ENCODE measurements at regions of chr20 and their contacts with region 1.

Region 1: DNA sequence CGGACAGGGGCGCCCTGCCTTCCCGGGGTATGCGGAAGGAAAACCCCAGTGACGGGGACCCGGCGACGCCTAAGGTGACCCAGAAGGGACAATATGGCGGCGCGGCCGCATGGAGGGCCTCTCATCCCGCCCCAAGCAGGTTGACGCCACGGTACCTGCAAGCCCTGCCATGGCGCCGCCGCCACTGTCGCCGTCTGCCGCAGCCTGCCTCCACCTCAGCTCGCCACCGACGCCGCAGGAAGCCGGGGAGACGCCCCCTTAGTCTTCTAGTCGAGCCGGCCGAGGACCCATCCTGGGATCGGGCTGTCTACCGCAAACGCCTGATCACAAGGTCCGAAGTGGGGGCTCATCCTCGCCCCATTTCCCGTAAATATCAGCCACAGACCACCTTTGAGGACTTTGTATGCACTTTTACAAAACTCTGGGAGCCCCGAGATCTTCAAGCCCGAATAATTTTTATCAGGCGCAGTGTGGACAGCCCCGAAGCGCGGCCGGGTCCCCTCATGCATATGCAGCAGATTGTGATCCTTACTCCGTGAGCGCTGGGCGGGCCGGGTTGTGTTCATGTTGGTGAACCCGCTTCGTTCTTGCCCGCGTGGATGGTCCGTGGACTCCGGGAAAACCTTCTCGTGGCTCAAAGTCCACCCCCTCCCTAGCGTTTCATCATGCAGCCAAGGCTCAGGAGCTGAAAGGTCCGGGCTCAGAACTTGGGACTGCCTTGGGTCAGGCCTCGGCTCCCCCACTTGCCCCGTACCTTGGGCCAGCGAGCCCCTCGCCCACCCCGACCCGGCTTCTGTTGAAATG is at the start of gene BLCAP:
- DNase-seq: peak; percentile 93
- H3K4me3 Mint-ChIP-seq: peak within 1 kb of the TSS; percentile 86
- H3K27ac Mint-ChIP-seq: peak within 1 kb of the TSS; percentile 99
- H3K4me1 Mint-ChIP-seq: peaks cover 42% of the 10 kb centered on the region
- H3K27me3 Mint-ChIP-seq: peaks cover 1% of the 10 kb centered on the region
- total RNA-seq, gene BLCAP: 16.0 to 16.4 TPM

Region 2: DNA sequence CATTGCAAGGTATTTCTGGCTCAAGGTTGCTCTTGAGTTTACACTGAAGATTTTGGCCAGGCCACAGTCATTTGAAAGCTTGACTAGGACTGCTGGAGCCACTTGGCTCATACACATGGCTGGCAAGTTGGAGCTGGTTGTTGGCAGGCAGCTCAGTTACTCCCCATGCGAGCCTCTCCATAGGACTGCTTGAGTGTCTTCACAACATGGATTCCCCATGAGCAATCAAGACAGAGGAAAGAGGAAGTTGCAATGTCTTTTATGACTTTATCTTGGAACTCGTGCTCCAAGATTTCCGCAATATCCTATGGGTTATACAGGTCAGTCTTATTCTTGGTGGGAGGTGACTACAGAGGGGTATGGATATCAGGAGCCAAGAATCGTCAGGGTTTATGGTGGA is 239.7 kb before region 1 on chr20:
- CTCF ChIA-PET with region 1: no interaction called
- POLR2A ChIA-PET with region 1: no interaction called
- intact Hi-C with region 1: loop called (anchors 5 kb)
- DNase-seq: no peak
- H3K4me3 Mint-ChIP-seq: peak overlapping the region; percentile 18
- H3K27ac Mint-ChIP-seq: no peak overlapping the region
- H3K4me1 Mint-ChIP-seq: peaks cover 23% of the 10 kb centered on the region
- H3K27me3 Mint-ChIP-seq: peaks cover 2% of the 10 kb centered on the region

Region 3: DNA sequence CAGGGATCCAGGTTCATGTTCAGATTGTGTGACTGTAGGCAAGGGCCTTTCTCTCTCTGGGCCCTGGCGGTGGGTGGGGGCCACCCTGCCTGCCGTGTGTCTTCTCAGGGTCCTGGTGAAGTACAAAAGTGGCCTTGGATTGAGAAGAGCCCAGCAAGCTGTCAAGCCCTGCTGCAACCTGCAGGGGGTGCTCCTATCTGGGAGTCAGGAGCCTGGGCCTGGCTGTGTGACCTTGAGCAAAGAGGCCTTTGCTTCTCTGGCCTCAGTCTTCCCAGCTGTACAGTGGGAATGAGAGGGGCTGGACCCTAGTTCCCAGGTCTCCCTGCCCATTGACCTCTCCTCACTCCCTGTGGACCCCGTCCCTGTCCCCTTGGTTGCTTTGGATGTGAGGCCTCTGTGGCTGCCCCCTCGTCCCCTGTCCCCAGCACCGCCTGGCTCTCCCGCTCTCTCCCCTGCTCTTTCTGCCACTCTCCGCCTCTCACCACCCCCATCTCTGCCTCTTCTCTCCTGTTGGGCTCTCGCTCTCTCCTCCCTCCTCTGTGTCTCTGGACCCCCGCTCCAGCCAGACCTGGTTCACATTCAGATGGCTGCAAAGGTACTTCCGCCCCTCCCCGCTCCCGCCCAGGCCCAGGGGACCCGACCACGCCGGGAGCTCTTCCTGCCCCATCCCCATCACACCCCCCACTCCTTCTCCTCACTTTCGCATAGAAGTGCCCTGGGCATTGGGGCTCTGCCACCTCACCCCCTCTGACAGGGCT is 135.2 kb before region 1 on chr20:
- CTCF ChIA-PET with region 1: no interaction called
- POLR2A ChIA-PET with region 1: no interaction called
- intact Hi-C with region 1: loop called (anchors 5 kb)
- DNase-seq: peak; percentile 43
- H3K4me3 Mint-ChIP-seq: no peak overlapping the region
- H3K27ac Mint-ChIP-seq: no peak overlapping the region
- H3K4me1 Mint-ChIP-seq: no peaks in the 10 kb centered on the region
- H3K27me3 Mint-ChIP-seq: no peaks in the 10 kb centered on the region

Region 4: DNA sequence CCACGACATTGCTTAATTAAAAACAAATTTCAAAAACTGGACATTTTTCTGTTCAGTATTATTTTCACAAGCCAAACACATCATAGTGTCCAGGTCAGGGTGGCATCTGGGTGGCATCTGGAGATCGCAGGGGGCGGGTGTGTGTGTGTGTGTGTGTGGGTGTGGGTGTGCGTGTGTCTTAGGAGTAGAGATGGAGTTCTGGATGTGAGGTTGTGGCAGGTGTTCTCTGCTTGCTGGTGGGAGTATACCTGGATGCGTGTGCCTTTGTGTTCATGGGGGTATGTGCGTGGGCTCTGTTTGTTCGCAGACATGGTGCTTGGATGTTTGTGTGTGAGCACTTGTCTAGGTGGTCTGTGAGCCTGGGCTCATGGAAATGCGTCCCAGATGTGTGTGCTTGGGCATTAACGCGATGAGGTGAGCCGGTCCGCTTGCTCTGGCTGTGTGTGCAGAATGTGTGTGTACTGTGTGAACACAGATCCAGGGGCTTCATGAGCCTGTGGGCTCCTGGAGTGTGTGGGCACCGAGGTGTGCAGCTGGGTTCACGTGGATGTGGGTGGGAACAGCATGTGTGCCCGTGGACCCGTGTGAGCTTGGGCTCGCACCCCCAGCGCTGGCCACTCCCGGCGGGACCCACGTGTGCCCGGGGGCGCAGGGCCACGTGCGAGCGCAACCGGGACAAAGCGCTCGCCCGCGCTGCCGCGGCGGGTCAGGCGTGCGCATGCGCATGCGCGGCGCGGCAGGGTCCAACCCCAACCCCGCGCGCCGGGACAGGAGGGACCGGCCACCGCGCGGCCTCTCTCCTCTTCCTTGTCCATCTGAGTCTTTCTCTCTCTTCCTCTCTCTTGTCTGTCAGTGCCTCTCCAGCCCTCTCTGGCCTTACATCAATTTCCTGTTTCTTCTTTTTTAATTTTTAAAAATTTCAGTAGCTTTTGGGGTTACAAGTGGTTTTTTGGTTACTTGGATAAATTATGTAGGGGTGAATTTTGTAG is 121.5 kb before region 1 on chr20:
- CTCF ChIA-PET with region 1: no interaction called
- POLR2A ChIA-PET with region 1: no interaction called
- intact Hi-C with region 1: loop called (anchors 2 kb)
- DNase-seq: peak; percentile 47
- H3K4me3 Mint-ChIP-seq: peak overlapping the region; percentile 18
- H3K27ac Mint-ChIP-seq: no peak overlapping the region
- H3K4me1 Mint-ChIP-seq: peaks cover 13% of the 10 kb centered on the region
- H3K27me3 Mint-ChIP-seq: peaks cover 23% of the 10 kb centered on the region

Region 5: GRCh38 chr20:37627060-37627769 is 99.4 kb after region 1 on chr20:
- CTCF ChIA-PET with region 1: no interaction called
- POLR2A ChIA-PET with region 1: no interaction called
- intact Hi-C with region 1: no loop called
- DNase-seq: peak; percentile 59
- H3K4me3 Mint-ChIP-seq: no peak overlapping the region
- H3K27ac Mint-ChIP-seq: no peak overlapping the region
- H3K4me1 Mint-ChIP-seq: no peaks in the 10 kb centered on the region
- H3K27me3 Mint-ChIP-seq: peaks cover 57% of the 10 kb centered on the region

Measured in activated CD4-positive, alpha-beta memory T cell treated with anti-CD3 and anti-CD28 coated beads for 36 hours (primary cell).